Adrenal gland (tissue), 19 donors: ENCODE measurements at regions of chr17 and their contacts with region 1.

Region 1: GRCh38 chr17:27430882-27431491 is 25.3 kb upstream of the KSR1 start:
- DNase-seq: peak; percentile 46 to 75 (median 57)
- H3K4me3 ChIP-seq: no peak overlapping the region
- H3K27ac ChIP-seq: no peak overlapping the region
- H3K4me1 ChIP-seq: no peaks in the 10 kb centered on the region
- H3K27me3 ChIP-seq: no peaks in the 10 kb centered on the region
- CTCF ChIP-seq: peak; percentile 32 to 76 (median 58)
- POLR2A ChIP-seq: no peak

Region 2: GRCh38 chr17:27282054-27282551 is 148.9 kb before region 1 on chr17:
- intact Hi-C with region 1: no loop called
- DNase-seq: no peak
- H3K4me3 ChIP-seq: no peak overlapping the region
- H3K27ac ChIP-seq: peak overlapping the region in 2 of 5 donors; percentile 3 to 51
- H3K4me1 ChIP-seq: peaks cover 6 to 28% of the 10 kb centered on the region in 2 donors
- H3K27me3 ChIP-seq: no peaks in the 10 kb centered on the region
- CTCF ChIP-seq: no peak
- POLR2A ChIP-seq: no peak

Region 3: GRCh38 chr17:27353461-27354050 is 77.4 kb before region 1 on chr17:
- intact Hi-C with region 1: loop called in 1 of 2 experiments (anchors 10 kb)
- DNase-seq: peak; percentile 94 to 96 (median 94)
- H3K4me3 ChIP-seq: peak overlapping the region in 2 of 4 donors; percentile 50 to 57
- H3K27ac ChIP-seq: peak overlapping the region; percentile 7 to 92 (median 88)
- H3K4me1 ChIP-seq: peaks cover 2 to 21% of the 10 kb centered on the region in 2 donors
- H3K27me3 ChIP-seq: no peaks in the 10 kb centered on the region
- CTCF ChIP-seq: peak; percentile 18 to 100 (median 72)
- POLR2A ChIP-seq: peak; percentile 86 to 92